ENCODE measurements at regions of chr5 and their contacts with region 1.

Region 1: GRCh38 chr5:132293066-132293991 is 865 bp upstream of the SLC22A4 start:
- DNase-seq: peak; percentile 97 to 98 (median 98)
- H3K4me3 ChIP-seq: peak overlapping the region; percentile 85
- H3K27ac ChIP-seq: peak overlapping the region; percentile 92 to 100
- H3K4me1 ChIP-seq: peaks cover 2% of the 10 kb centered on the region
- H3K27me3 ChIP-seq: no peaks in the 10 kb centered on the region
- CTCF ChIP-seq: peak in 1 of 3 donors; percentile 29
- EP300 ChIP-seq: no peak
- POLR2A ChIP-seq: peak; percentile 47

Region 2: DNA sequence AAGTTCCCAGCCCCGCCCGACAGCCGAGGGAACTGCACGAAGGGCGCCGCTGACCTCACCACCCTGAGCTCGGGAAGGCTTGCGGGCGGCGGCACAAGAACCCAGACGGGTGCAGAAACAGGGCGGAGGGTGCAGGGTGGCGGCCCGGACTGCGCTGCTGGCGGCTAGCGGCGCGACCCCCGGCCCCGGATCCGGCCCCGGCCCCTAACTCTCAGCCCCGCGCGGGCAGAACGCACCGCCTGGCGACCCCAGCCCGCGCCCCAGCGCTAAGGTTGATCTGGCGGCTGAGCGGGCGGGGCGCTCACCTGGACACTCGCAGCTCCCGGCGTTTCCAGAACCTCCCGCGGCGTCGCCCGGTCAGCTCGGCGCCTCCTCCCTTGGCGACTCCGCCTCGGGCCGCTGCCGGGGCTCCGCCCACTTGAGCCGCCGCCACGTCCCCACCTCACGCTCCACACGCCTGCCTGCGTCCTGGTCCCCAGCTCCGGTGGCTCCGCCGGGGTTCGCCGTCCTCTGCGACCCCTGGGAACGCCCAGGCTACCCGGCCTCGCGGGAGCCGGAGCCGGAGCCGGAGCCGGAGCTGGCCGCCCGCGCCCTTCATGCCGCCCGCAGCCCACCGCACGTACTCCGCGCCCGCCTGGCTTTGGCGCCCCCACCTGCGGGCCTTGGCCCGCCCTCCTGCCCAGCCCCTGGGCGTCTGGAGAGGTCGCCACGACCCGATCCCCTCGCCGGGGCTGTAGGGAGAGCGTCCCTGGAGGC is 65.7 kb before region 1 on chr5 and contains the start of gene P4HA2:
- intact Hi-C with region 1: loop called in 1 of 4 experiments (anchors 10 kb)
- DNase-seq: peak; percentile 77 to 89 (median 82)
- H3K4me3 ChIP-seq: peak within 1 kb of the TSS; percentile 44
- H3K27ac ChIP-seq: peak within 1 kb of the TSS; percentile 8 to 73
- H3K4me1 ChIP-seq: peaks cover 7% of the 10 kb centered on the region
- H3K27me3 ChIP-seq: no peaks in the 10 kb centered on the region
- CTCF ChIP-seq: peak in 2 of 3 donors; percentile 47 to 51
- EP300 ChIP-seq: no peak
- POLR2A ChIP-seq: no peak
- total RNA-seq, gene P4HA2: 3.9 to 36.9 (median 15.4) TPM

Region 3: GRCh38 chr5:132243366-132243977 is 49.9 kb before region 1 on chr5:
- intact Hi-C with region 1: no loop called
- DNase-seq: peak in 1 of 5 donors; percentile 1
- H3K4me3 ChIP-seq: no peak overlapping the region
- H3K27ac ChIP-seq: no peak overlapping the region
- H3K4me1 ChIP-seq: no peaks in the 10 kb centered on the region
- H3K27me3 ChIP-seq: no peaks in the 10 kb centered on the region
- CTCF ChIP-seq: no peak
- EP300 ChIP-seq: no peak
- POLR2A ChIP-seq: no peak

Region 4: DNA sequence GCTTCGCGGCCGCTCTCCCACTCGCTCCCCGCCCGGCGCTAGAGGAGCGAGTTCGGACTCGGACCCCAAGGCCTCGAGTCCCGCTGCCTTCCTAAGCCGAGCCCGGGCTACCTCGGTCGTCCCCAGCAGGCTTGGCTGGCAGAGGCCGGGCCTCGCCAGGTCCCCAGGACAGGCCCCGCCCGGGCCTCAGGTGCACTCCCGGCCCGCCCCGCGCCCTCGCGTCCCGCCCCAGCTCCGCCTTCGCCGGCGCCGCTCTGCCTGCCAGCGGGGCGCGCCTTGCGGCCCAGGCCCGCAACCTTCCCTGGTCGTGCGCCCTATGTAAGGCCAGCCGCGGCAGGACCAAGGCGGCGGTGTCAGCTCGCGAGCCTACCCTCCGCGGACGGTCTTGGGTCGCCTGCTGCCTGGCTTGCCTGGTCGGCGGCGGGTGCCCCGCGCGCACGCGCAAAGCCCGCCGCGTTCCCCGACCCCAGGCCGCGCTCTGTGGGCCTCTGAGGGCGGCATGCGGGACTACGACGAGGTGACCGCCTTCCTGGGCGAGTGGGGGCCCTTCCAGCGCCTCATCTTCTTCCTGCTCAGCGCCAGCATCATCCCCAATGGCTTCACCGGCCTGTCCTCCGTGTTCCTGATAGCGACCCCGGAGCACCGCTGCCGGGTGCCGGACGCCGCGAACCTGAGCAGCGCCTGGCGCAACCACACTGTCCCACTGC is 76.3 kb after region 1 on chr5 and contains the start of gene SLC22A5:
- intact Hi-C with region 1: loop called in 2 of 4 experiments (anchors 10 kb)
- DNase-seq: peak; percentile 45 to 78 (median 64)
- H3K4me3 ChIP-seq: peak within 1 kb of the TSS; percentile 77
- H3K27ac ChIP-seq: peak within 1 kb of the TSS; percentile 75 to 79
- H3K4me1 ChIP-seq: peaks cover 4% of the 10 kb centered on the region
- H3K27me3 ChIP-seq: no peaks in the 10 kb centered on the region
- CTCF ChIP-seq: no peak
- EP300 ChIP-seq: no peak
- POLR2A ChIP-seq: peak; percentile 14
- total RNA-seq, gene SLC22A5: 8.7 to 37.5 (median 10.6) TPM

Measured in ovary (tissue), 10 donors.